Activated CD4-positive, alpha-beta T cell treated with anti-CD3 and anti-CD28 coated beads, Interleukin-2, amount 10 ng/mL, durations not matched to agents 24 days and 14 days (primary cell): ENCODE measurements at regions of chrX and their contacts with region 1.

Region 1: DNA sequence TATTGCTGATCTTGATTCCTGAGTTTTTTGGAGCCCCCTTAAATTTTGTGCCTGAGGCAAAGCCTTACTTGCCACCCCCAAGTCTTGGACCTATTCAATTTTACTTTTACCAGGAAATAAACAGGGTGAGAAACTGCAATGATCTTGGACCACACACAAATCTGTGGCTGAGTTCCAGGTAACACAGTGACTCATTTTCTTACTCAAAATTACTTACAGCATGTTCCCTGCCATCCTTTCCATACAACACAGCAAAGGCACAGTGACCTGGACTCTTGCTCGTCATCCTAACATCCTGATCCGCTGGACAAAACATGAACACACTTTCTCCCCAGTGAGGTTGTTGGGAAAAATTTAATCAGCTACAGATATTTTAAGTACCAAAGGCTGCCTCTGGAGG is 60.7 kb upstream of the S100G start:
- DNase-seq: no peak
- H3K4me3 Mint-ChIP-seq: no peak overlapping the region
- H3K27ac Mint-ChIP-seq: no peak overlapping the region
- H3K4me1 Mint-ChIP-seq: peaks cover 7% of the 10 kb centered on the region
- H3K27me3 Mint-ChIP-seq: no peaks in the 10 kb centered on the region

Region 2: DNA sequence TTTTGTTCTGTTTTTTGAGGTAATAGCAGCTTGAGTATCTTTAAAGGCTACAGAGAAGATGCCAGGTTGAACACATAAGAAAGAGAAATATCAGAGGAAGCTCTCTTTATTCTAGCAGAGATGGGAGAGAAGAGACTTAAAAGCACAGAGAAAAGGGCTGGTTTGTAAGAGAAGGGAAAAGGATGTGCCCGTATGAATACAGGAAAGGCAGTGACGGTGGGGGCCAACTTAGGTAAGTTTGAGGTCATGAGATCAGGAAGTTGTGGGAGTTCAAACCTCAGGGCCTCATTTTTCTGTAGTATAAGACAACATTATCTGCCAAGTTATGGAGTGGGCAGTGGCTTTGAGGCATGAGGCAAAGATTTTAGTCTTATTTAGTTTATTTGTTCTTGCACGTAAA is 60.6 kb before region 1 on chrX:
- intact Hi-C with region 1: loop called (anchors 2 kb)
- DNase-seq: peak; percentile 74
- H3K4me3 Mint-ChIP-seq: peak overlapping the region; percentile 69
- H3K27ac Mint-ChIP-seq: peak overlapping the region; percentile 89
- H3K4me1 Mint-ChIP-seq: peaks cover 15% of the 10 kb centered on the region
- H3K27me3 Mint-ChIP-seq: no peaks in the 10 kb centered on the region